ENCODE measurements at regions of chr14 and their contacts with region 1.

Region 1: DNA sequence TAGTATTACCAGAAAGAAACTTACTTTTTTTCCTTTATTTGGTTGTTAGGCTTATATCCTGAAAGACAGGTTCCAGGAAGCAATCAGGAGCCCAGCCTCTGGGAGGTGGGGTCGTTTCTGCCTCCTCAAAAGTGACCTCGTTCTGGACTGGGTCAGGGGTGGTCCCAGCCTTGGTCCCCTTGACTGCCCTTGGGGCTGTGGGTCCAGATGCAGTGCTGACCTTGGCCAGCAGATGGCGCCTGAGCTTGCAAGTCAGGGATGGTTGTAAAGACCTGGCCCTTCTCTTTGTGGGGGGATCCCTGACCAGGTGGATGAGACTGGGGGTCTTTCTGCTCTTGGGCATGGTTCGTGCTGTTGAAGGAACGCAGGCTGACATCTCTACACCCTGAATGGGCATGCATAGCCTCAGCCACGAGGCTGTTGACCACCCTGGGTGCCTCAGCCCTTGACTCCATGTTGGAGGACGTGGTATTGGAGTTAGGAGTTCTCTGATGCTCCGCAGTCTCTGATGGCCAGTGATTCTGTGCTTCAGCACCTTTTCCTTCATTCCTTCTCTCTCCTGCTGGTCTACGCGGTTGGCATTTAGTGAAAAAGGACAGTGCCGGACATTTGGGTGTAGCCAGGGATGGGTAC is 62.4 kb downstream of the ADCK1 start:
- DNase-seq: peak; percentile 82 to 93
- ATAC-seq: peak; percentile 70
- H3K4me3 ChIP-seq: no peak overlapping the region
- H3K27ac ChIP-seq: no peak overlapping the region
- H3K4me1 ChIP-seq: no peaks in the 10 kb centered on the region
- H3K27me3 ChIP-seq: no peaks in the 10 kb centered on the region

Region 2: DNA sequence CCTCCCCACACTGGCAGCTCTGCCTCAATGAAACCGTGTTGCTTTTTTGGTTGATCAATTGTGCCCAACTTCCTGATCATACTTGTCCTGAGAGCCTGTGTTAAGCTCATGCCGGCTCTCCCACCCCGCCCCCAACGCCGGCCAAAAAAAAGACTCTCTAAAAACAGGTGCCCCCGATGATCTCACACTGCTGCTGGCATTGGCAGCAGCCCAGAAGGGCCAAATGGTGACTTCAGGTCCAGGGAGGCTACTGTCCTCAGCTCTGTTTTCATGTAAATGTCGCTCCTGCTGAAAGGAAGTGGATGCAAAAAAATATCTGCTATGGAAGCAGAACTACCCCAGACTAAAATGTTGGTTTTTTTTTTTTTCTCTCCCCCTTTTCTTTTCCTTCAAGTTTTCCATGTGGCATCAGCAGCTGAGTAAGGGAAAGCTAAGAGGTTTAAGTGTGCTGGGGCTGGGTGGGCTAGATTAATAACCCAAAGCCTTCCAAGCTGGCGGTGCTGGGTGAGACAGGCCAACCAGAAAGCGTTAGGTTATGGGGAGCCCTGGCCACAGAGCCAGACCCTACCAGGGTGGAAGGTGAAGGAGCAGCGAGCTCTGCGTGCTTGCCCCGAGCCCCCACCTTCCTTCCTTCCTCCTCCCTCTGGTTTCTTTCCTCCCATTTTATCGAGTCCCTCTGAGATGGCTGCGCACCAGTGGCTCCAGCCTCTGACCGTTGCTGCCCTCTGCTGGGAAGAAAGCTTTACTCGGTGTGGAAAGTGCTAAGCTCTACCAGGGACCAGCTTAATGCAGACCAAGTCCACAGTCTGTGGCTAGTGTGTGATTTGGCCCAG is 704.0 kb after region 1 on chr14:
- intact Hi-C with region 1: loop called in 1 of 2 experiments (anchors 2 kb)
- DNase-seq: peak; percentile 82 to 88
- ATAC-seq: peak; percentile 91
- H3K4me3 ChIP-seq: peak overlapping the region; percentile 8 to 39
- H3K27ac ChIP-seq: no peak overlapping the region
- H3K4me1 ChIP-seq: no peaks in the 10 kb centered on the region
- H3K27me3 ChIP-seq: no peaks in the 10 kb centered on the region

Region 3: DNA sequence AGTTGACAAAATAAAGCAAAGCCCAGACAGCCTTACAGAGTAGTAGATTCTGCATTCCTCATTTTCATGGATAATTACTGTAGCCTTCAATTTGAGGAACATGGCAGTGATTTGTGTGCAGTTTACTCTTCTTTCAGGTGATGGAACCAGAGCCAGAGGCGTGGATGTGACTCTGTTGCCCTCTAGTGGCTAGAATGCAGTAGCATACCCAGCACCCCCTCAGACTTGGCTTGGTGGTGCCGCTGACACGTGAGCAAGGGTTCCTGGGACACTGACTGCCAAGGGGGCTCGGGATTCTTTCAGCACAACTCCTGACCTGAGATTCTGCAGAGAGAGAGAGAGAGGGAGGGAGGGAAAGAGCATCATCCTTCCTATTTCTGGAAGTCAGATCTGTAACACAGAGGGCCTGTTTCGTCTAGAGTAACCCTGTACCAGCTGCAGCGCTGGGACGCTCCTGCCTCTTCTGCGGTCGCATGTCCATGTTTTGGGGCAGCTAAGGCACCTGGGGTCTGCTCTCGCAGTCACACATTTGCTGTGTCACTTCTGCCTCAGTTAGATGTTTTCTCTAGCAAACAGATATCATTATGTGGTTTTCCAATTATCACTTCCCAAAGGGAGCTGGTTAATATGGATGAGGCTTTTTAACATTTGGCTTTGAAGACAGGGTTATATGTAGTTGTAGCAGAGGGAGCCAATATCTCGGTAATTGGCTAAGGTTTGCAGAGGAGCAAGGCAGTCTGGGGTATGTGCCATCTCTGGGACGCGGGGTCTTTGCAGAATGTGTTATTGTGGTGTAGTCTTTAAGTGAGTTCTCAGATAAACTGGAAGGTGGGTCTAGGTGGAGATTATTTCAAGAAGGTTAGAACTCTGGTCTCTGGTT is 736.0 kb after region 1 on chr14:
- intact Hi-C with region 1: loop called in 1 of 2 experiments (anchors 2 kb)
- DNase-seq: no peak
- ATAC-seq: no peak
- H3K4me3 ChIP-seq: no peak overlapping the region
- H3K27ac ChIP-seq: no peak overlapping the region
- H3K4me1 ChIP-seq: no peaks in the 10 kb centered on the region
- H3K27me3 ChIP-seq: no peaks in the 10 kb centered on the region

Measured in aorta (tissue), 5 donors.